Breast epithelium (tissue), 4 donors: ENCODE measurements at regions of chr18 and their contacts with region 1.

Region 1: DNA sequence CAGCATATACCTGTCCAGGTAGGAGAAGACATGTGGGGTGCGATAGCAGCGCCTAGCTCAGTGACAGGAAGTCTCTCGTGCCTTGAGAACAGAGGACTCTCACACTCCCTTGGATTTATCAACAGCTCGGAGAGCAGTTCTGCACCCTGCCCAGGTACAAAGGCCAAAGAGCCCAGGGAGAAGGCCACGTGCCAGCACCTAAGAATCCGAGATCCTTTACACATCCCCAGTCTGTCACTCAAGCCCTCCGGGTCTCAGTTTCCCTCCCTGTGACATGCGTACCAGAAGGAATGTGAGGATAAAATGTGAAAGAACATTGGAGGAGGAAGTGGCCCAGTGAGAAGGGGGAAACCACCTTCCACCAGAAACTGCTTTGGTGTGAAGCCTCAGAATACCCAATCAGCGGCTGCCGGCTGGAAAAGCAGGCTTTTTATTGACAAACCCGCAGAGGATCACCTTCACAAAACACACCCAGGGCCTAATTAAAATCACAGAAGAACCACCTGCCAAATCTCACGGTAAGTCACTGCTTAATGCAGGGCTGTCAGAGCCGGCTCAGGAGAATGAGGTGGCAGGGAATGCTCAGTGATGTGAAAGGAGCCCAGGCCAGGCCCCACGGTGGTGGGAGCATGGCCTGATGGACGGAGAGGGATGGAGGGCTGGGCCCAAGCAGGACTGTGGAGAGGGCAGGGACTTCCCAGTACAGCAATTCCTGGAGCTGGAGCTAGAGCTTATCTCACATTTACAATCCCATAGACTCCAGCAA is 66.3 kb downstream of the MYO5B start:
- DNase-seq: peak in 1 of 2 donors; percentile 52
- H3K4me3 ChIP-seq: no peak overlapping the region
- H3K27ac ChIP-seq: peak overlapping the region; percentile 71 to 83
- H3K4me1 ChIP-seq: no peaks in the 10 kb centered on the region
- H3K27me3 ChIP-seq: no peaks in the 10 kb centered on the region
- CTCF ChIP-seq: no peak
- POLR2A ChIP-seq: no peak

Region 2: DNA sequence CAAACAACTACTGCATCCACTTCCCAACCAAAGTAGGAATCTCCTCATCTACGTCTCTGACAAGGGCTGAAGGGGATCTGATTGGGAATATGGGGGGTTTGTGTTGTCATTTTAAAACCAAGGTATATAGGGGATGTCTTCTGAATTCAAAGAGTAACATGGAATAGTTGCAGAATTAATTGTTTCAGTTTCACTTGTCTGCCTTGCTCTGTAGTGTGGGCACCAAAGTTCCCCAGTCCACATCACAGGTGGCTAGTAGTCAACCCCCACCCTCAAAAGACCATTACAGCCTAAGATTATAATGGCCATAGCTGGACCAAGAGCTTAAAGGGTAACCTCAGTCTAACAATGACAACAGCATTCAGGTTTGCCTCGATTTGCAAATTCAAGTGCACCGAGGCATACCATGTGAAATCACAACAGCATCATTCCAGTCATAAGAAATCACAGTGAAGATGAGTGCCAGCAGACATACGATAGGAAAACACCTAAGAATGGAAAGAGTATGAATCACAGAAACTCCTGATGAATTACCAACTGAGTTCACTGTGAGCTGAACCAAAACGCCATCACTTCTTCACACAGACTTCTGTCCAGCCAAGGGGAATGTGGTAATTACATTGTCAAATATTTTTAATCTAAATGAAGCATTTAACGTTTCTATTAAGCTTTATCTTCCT is 13.9 kb after region 1 on chr18:
- intact Hi-C with region 1: no loop called
- DNase-seq: no peak
- H3K4me3 ChIP-seq: no peak overlapping the region
- H3K27ac ChIP-seq: no peak overlapping the region
- H3K4me1 ChIP-seq: no peaks in the 10 kb centered on the region
- H3K27me3 ChIP-seq: no peaks in the 10 kb centered on the region
- CTCF ChIP-seq: no peak
- POLR2A ChIP-seq: no peak

Region 3: GRCh38 chr18:50152900-50153299 is 24.2 kb after region 1 on chr18:
- intact Hi-C with region 1: loop called (anchors 1 kb)
- DNase-seq: no peak
- H3K4me3 ChIP-seq: no peak overlapping the region
- H3K27ac ChIP-seq: no peak overlapping the region
- H3K4me1 ChIP-seq: no peaks in the 10 kb centered on the region
- H3K27me3 ChIP-seq: no peaks in the 10 kb centered on the region
- CTCF ChIP-seq: no peak
- POLR2A ChIP-seq: no peak